WTC11 (cell line): ENCODE measurements at regions of chr17 and their contacts with region 1.

Region 1: DNA sequence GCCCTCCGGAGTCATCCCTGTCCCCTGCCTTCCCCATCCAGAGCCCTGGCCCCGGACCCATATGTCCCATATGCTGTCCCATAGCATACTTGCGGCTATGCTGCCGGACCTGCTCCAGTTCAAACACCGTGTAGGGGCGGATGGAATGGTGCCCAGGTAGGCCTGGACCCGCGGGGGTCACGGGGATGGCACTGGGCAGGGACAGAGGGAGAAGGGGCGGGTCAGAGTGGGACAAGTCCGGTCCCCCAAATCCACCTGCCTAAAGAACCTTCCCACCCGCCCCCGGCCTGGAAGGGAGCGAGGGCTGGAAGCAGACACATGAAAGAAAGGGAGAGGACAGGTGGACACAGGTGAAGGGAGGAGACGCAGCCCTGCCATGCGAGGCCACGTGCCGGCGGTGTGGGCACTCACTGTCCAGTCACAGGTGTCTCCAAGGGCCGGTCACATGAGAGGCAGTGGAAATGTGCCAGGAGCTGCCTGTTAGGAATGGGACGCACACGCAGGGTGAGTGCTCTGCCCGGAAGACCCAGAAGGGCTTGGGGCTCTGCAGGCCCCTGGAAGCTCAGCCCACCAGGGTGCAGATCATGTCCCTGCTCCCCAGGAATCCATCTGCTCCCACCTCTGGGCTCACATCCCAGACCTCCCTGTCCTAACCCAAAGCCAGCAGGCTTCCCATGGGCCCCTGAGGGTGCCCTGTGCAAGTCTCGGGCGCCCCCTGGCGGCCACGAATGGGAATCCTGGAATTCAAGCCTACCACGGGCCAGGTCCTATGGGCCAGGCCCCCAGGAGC is 14.0 kb downstream of the UBALD2 start:
- DNase-seq: peak; percentile 94
- ATAC-seq: peak; percentile 93
- H3K4me3 Mint-ChIP-seq: no peak overlapping the region
- H3K27ac Mint-ChIP-seq: no peak overlapping the region
- H3K4me1 Mint-ChIP-seq: no peaks in the 10 kb centered on the region
- H3K27me3 Mint-ChIP-seq: no peaks in the 10 kb centered on the region
- CTCF ChIP-seq: peak; percentile 96

Region 2: GRCh38 chr17:76000016-76000754 is 279.0 kb before region 1 on chr17:
- CTCF ChIA-PET with region 1: interaction called, 20 read pairs
- POLR2A ChIA-PET with region 1: no interaction called
- DNase-seq: peak; percentile 90
- ATAC-seq: peak; percentile 92
- H3K4me3 Mint-ChIP-seq: no peak overlapping the region
- H3K27ac Mint-ChIP-seq: no peak overlapping the region; the same call in 1 of the 2 replicates
- H3K4me1 Mint-ChIP-seq: peaks cover 14% of the 10 kb centered on the region
- H3K27me3 Mint-ChIP-seq: no peaks in the 10 kb centered on the region
- CTCF ChIP-seq: peak; percentile 81

Region 3: DNA sequence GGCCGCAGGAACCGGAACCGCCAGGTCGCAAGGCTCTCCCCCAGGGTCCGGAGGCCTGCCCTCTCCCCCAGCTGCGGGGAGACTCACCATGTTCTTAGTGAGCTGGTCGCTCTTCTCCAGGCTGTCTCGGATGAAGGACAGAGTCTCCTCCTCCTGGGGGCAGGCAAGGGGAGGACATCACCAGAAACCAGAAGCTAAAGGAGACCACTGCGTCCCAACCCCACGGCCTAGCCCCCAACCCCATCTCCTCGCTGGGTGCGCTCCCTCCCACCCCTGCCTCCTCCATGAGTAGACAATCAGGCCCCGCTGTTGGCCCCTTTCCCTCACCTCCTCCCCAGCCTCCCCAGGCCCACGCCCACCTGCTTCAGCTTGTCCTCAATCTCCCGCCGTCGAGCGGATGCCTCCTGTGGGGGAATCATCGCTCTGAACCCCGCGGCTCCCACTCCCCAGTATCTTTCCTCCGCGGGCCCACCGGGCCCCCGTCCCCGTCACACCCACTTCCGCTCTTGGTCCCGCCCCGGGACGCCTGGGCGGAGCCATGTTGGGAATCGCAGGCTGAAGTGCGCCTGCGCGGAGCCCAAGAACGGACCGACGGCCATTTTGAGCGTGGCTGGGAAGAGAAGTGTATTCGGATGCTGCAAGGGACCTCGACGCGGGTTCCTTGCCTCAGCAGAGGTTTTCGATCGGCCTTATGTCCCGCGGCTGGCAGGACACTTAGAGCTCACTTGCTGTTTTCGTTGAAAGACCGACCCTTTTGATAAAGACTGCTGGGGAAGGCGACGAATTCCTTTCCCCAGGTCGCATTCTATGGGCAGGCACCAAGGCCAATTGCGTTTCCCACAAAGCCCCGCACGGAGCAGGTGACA is 175.6 kb before region 1 on chr17 and contains the start of gene EXOC7:
- CTCF ChIA-PET with region 1: interaction called, 27 read pairs
- POLR2A ChIA-PET with region 1: no interaction called
- DNase-seq: peak; percentile 92
- ATAC-seq: peak; percentile 72
- H3K4me3 Mint-ChIP-seq: peak within 1 kb of the TSS; percentile 88
- H3K27ac Mint-ChIP-seq: peak within 1 kb of the TSS; percentile 97
- H3K4me1 Mint-ChIP-seq: peaks cover 28% of the 10 kb centered on the region
- H3K27me3 Mint-ChIP-seq: no peaks in the 10 kb centered on the region; the same call in 1 of the 2 replicates
- CTCF ChIP-seq: no peak
- total RNA-seq, gene EXOC7: 90.0 to 126 TPM (median 96.2 TPM) in 3 replicates

Region 4: DNA sequence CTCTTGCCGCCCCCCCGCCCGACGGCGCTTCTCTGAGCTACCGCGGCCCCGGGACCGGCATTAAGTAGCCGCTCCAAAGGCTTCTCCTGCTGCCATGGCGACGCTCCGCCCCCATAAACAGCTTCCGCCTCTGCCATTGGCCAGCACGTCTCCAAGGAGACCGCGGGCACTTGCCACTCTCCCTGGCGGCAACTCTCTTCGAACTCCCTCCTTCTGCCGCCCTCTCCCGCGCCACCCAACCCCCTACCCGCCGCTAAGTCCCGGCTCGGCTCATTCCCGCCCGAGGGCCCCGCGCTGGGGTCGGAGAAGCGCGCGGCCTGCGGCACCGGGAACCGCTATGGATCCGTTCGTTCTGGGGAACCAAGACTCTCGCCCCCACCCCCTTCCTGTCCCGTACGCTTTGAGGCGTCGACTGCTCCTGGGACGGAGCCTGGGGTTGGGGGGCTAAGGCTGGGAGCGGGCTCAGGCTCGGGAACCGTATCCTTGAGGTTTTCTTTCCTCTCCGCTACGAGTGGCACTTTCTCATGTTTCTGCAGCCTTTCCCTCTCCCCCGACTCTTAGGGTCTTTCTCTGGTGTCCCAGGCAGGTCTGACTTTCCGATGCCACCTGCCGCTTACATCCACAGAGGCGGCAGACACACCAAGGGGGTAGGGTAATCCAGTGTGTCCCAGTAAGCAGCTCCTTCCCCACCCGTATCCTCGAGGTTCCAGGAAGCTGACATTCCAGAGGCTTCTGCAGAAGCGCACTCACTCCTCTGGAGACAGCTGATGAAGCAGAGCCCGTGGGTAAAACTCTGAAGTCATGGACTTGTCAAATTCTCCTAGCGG is 137.7 kb before region 1 on chr17 and contains the start of gene FOXJ1:
- CTCF ChIA-PET with region 1: interaction called, 19 read pairs
- POLR2A ChIA-PET with region 1: interaction called, 3 read pairs
- DNase-seq: peak; percentile 97
- ATAC-seq: peak; percentile 61
- H3K4me3 Mint-ChIP-seq: peak within 1 kb of the TSS; percentile 82
- H3K27ac Mint-ChIP-seq: no peak within 1 kb of the TSS
- H3K4me1 Mint-ChIP-seq: peaks cover 81% of the 10 kb centered on the region
- H3K27me3 Mint-ChIP-seq: peaks cover 67% of the 10 kb centered on the region
- CTCF ChIP-seq: no peak
- total RNA-seq, gene FOXJ1: 6.2 to 11.8 TPM (median 6.8 TPM) in 3 replicates

Region 5: DNA sequence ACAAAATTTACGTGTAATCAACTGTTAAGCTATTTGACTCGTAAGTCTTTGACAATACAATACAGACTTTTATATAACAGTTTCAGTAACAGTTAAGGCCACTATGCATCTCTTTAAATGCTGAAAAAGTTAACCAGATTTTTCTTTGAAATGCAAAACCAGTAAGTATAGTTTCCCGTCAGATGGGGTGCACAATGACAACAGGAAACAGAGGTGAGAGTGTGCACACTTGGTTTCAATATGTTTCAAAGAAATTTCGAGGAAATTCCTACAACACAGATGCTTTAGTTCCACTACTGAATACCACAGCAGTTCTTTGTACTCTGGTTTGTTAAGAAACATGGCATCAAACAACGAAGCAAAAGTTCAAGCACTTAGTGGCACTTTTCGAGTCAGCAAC is 87.3 kb before region 1 on chr17:
- CTCF ChIA-PET with region 1: interaction called, 21 read pairs
- POLR2A ChIA-PET with region 1: no interaction called
- DNase-seq: no peak
- ATAC-seq: no peak
- H3K4me3 Mint-ChIP-seq: no peak overlapping the region
- H3K27ac Mint-ChIP-seq: no peak overlapping the region
- H3K4me1 Mint-ChIP-seq: peaks cover 25% of the 10 kb centered on the region
- H3K27me3 Mint-ChIP-seq: no peaks in the 10 kb centered on the region
- CTCF ChIP-seq: no peak

Region 6: GRCh38 chr17:76246080-76247066 is 32.8 kb before region 1 on chr17:
- CTCF ChIA-PET with region 1: interaction called, 19 read pairs
- POLR2A ChIA-PET with region 1: interaction called, 3 read pairs
- DNase-seq: no peak
- ATAC-seq: no peak
- H3K4me3 Mint-ChIP-seq: no peak overlapping the region
- H3K27ac Mint-ChIP-seq: no peak overlapping the region
- H3K4me1 Mint-ChIP-seq: peaks cover 6% of the 10 kb centered on the region
- H3K27me3 Mint-ChIP-seq: peaks cover 27% of the 10 kb centered on the region
- CTCF ChIP-seq: no peak